Activated CD8-positive, alpha-beta T cell treated with anti-CD3 and anti-CD28 coated beads, Interleukin-2, amount 10 ng/mL, durations not matched to agents 7 days and 5 days (primary cell): ENCODE measurements at regions of chr7 and their contacts with region 1.

Region 1: GRCh38 chr7:144378651-144379050 is 23.4 kb downstream of the ARHGEF5 start:
- DNase-seq: no peak
- ATAC-seq: no peak
- H3K4me3 Mint-ChIP-seq: no peak overlapping the region
- H3K27ac Mint-ChIP-seq: no peak overlapping the region
- H3K4me1 Mint-ChIP-seq: no peaks in the 10 kb centered on the region
- H3K27me3 Mint-ChIP-seq: no peaks in the 10 kb centered on the region

Region 2: DNA sequence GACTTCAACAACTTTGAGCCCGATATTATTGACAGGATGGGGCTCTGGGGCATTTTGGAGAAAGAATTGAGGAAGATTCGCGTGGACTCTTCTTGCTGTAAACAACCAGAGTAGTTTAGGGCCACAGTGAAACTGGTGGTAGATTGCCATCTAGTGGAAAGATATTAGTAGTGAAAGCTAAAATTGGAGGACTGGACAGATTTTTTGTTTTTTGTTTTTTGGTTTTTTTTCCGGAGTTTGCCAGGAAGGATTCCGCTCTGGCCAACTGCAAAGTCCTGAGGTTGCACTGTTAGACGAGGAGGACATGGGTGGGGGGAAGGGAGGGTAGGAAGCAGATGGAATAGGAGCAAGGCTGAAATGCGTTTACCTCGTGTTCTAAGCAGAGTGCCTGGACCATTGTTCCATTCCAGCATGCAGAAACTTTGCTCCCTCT is 13.2 kb after region 1 on chr7:
- CTCF ChIA-PET with region 1: interaction called, 19 read pairs
- POLR2A ChIA-PET with region 1: no interaction called
- DNase-seq: peak; percentile 49
- ATAC-seq: peak; percentile 74
- H3K4me3 Mint-ChIP-seq: peak overlapping the region; percentile 34
- H3K27ac Mint-ChIP-seq: no peak overlapping the region
- H3K4me1 Mint-ChIP-seq: peaks cover 4% of the 10 kb centered on the region
- H3K27me3 Mint-ChIP-seq: peaks cover 8% of the 10 kb centered on the region